Heart right ventricle (tissue), 16 donors: ENCODE measurements at regions of chr1 and their contacts with region 1.

Region 1: GRCh38 chr1:94801919-94802546 is 18.1 kb upstream of the SLC44A3 start:
- DNase-seq: peak; percentile 21 to 23
- ATAC-seq: peak; percentile 74 to 89 (median 84)
- H3K4me3 ChIP-seq: peak overlapping the region in 5 of 10 donors; percentile 4 to 31 (median 24)
- H3K27ac ChIP-seq: peak overlapping the region in 9 of 10 donors; percentile 24 to 78 (median 66)
- H3K4me1 ChIP-seq: peaks cover 3 to 60% (median 36%) of the 10 kb centered on the region in 9 donors
- H3K27me3 ChIP-seq: no peaks in the 10 kb centered on the region
- CTCF ChIP-seq: peak in 8 of 9 donors; percentile 18 to 73 (median 61)

Region 2: DNA sequence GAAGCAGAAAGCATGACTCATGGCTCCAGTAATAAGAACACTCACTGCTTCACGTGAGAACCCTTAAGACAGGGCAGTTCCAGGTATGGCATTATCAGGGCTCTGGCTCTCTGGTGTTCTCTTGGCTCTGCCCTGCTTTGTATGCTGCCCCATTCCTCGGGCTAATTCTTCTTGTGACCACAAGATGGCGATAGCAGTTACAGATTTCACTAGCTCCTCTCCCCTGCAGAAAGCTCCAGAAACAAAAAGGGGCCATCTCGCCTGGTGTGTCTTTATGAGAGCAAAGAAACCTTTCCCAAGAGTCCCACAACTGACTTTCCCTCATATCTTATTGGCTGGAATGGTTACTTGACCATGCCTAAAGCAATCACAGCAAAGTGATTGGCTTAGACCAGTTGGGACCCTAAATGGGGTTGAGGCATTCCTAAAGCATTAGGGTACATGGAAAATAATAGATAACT is 320.5 kb before region 1 on chr1:
- intact Hi-C with region 1: loop called in 9 of 10 experiments (anchors 1 to 10 kb)
- DNase-seq: peak in 1 of 2 donors; percentile 42
- ATAC-seq: peak; percentile 65 to 94 (median 89)
- H3K4me3 ChIP-seq: no peak overlapping the region
- H3K27ac ChIP-seq: no peak overlapping the region
- H3K4me1 ChIP-seq: peaks cover 0 to 7% (median 0%) of the 10 kb centered on the region in 9 donors
- H3K27me3 ChIP-seq: no peaks in the 10 kb centered on the region
- CTCF ChIP-seq: peak; percentile 67 to 88 (median 82)

Region 3: DNA sequence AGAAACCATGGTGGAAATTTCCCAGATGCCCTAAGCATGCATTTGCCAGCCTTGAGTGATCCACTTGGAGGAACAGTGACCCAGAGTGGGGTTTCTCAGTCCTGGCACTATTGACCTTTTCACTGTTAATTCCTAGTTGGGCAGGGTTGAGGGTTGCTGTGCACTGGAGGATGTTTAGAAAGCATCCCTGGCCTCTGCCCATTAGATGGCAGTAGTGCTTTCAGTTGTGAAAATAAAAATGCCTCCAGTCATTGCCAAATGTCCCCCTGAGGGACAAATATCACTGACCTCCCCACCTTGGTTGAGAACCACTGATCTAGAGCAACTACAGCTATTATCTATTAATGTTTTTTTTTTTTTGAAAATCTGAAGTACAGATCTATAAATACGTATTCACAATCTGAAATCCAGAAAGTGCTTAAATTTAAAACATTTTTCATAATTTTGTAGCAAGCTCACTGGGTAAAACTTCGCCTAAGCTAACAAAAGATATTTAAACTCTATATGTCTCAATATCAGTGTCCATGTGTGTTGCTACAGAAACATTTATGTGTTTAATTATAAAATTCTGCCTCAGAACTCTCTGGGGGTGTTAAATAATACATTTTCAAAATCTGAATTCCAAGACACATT is 287.8 kb before region 1 on chr1:
- intact Hi-C with region 1: loop called in 2 of 10 experiments (anchors 2 kb)
- DNase-seq: no peak
- ATAC-seq: peak in 5 of 8 donors; percentile 34 to 60 (median 44)
- H3K4me3 ChIP-seq: no peak overlapping the region
- H3K27ac ChIP-seq: no peak overlapping the region
- H3K4me1 ChIP-seq: peaks cover 0 to 9% (median 0%) of the 10 kb centered on the region in 9 donors
- H3K27me3 ChIP-seq: no peaks in the 10 kb centered on the region
- CTCF ChIP-seq: peak in 8 of 9 donors; percentile 16 to 71 (median 68)

Region 4: DNA sequence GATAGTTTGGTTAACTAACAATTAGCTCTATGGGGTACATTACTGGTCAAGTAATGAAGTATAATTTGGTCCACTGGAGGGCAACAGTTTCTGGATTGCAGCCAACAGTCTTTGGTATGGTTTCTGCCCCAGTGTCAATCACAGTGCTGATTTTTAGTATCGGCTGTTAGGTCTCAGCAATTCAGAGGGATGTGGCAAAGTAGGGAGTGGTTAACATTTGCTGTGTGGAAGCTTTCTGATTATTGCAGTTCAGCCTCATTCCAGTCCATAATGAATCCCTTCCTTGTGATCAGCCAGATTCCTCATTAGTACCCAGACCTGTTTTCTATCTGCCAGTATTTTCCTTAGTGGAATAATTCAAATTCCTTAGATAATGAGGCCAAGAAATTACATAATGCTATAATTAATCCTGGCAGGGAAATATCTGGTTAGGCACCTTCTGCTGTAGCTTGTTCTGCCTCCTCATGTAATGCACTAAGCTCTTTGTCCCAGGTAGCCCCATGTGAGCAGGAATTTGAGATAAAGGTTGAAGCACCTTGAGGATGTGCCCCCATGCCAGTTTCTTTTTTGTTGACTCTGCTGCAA is 274.5 kb before region 1 on chr1:
- intact Hi-C with region 1: loop called in 8 of 10 experiments (anchors 2 to 10 kb)
- DNase-seq: no peak
- ATAC-seq: peak; percentile 31 to 57 (median 42)
- H3K4me3 ChIP-seq: no peak overlapping the region
- H3K27ac ChIP-seq: peak overlapping the region in 2 of 10 donors; percentile 23 to 35
- H3K4me1 ChIP-seq: peaks cover 0 to 20% (median 9%) of the 10 kb centered on the region in 9 donors
- H3K27me3 ChIP-seq: no peaks in the 10 kb centered on the region
- CTCF ChIP-seq: peak in 3 of 9 donors; percentile 7 to 26 (median 13)

Region 5: DNA sequence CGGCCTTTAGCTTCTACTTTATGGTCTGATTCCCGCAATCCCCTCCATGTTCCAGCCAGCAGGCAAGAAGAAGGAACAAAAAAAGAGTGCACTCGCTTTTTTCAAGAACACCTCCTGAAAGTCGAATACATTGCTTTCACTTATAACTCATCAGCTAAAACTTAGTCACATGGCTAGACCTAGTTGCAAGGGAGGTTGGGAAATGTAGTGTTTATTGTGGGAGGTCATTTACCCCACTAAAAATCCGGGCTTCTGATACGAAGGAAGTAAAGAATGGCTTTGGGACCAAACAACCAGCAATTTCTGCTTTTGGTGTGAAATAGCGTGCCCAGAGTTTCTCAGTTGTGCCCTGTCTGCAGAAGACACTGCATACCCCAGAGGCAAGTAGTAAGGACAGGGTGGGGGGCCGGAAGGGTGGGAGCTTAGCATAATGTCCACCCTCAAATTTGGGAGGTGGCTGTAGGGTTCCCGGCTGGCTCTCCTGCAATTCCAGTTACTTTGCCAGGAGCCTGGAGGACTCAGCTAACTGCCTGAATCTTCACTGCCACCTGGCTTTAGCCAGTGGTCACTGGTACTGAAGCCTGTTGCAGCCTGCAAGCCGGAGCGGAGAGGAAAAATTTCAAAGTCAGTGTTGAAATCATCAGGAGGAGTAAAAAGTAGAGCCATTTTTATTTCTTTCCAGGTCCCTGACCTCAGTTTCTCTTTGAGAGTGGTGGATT is 202.8 kb before region 1 on chr1:
- intact Hi-C with region 1: loop called in 2 of 10 experiments (anchors 5 kb)
- DNase-seq: peak in 1 of 2 donors; percentile 34
- ATAC-seq: peak; percentile 68 to 90 (median 82)
- H3K4me3 ChIP-seq: no peak overlapping the region
- H3K27ac ChIP-seq: no peak overlapping the region
- H3K4me1 ChIP-seq: peaks cover 0 to 15% (median 0%) of the 10 kb centered on the region in 9 donors
- H3K27me3 ChIP-seq: peaks cover 0 to 20% (median 0%) of the 10 kb centered on the region in 7 donors
- CTCF ChIP-seq: peak; percentile 11 to 67 (median 59)

Region 6: DNA sequence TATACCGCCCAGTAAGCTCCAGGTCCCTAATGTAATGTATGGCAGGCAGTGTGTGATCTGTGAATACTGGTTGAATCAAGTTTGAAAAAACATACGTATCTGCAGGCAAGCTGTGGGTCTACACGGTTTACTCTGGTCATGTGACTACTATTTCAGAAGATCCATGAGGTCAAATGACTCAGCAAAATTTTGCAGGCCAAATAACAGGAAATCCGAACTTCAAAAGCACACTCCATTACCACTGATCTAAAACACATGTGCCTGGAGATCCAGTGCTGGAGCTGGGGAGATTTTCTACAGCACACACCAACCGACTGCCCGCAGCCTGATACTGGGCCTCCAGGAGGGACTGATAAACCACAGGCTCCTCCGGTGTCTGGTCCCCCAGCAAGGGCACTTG is 46.4 kb before region 1 on chr1:
- intact Hi-C with region 1: loop called in 2 of 10 experiments (anchors 5 kb)
- DNase-seq: peak in 1 of 2 donors; percentile 45
- ATAC-seq: peak; percentile 29 to 70 (median 42)
- H3K4me3 ChIP-seq: no peak overlapping the region
- H3K27ac ChIP-seq: peak overlapping the region in 4 of 10 donors; percentile 13 to 85 (median 70)
- H3K4me1 ChIP-seq: peaks cover 0 to 51% (median 32%) of the 10 kb centered on the region in 9 donors
- H3K27me3 ChIP-seq: no peaks in the 10 kb centered on the region
- CTCF ChIP-seq: no peak